ENCODE measurements at regions of chr22 and their contacts with region 1.

Region 1: GRCh38 chr22:42444077-42444904 is 12.1 kb upstream of the NFAM1 start:
- DNase-seq: peak; percentile 85
- H3K4me3 Mint-ChIP-seq: peak overlapping the region; percentile 64
- H3K27ac Mint-ChIP-seq: peak overlapping the region; percentile 69
- H3K4me1 Mint-ChIP-seq: peaks cover 31% of the 10 kb centered on the region
- H3K27me3 Mint-ChIP-seq: peaks cover under 1% of the 10 kb centered on the region

Region 2: GRCh38 chr22:41966607-41967240 is 477.6 kb before region 1 on chr22:
- CTCF ChIA-PET with region 1: interaction called, 12 read pairs
- POLR2A ChIA-PET with region 1: no interaction called
- DNase-seq: peak; percentile 54
- H3K4me3 Mint-ChIP-seq: no peak overlapping the region
- H3K27ac Mint-ChIP-seq: no peak overlapping the region
- H3K4me1 Mint-ChIP-seq: peaks cover 6% of the 10 kb centered on the region
- H3K27me3 Mint-ChIP-seq: peaks cover 2% of the 10 kb centered on the region

Region 3: GRCh38 chr22:42079319-42080251 is 364.7 kb before region 1 on chr22 and contains the start of gene SMDT1:
- CTCF ChIA-PET with region 1: interaction called, 5 read pairs
- POLR2A ChIA-PET with region 1: interaction called, 21 read pairs
- DNase-seq: peak; percentile 98
- H3K4me3 Mint-ChIP-seq: peak within 1 kb of the TSS; percentile 95
- H3K27ac Mint-ChIP-seq: peak within 1 kb of the TSS; percentile 92
- H3K4me1 Mint-ChIP-seq: peaks cover 42% of the 10 kb centered on the region
- H3K27me3 Mint-ChIP-seq: no peaks in the 10 kb centered on the region
- total RNA-seq, gene SMDT1: 92.7 to 98.1 TPM

Region 4: DNA sequence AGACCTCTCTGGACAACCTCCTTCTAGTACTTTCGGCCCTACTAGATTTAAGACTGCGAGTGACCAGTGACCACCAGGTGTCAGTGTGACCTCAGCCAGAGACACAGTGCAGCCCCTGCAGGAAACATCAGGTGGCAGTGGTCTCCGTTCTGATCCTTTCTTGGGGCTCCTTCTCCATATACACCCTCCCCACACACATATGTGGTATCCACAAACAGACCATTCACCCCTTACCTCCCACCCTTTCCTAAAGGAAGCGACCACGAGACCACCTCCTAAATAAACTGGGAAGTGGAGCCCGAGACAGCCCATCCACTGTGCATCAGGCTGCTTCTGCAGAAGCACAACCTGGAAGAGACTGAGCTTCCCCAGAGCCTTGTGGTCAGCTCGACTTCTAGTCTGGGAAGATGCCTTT is 275.2 kb before region 1 on chr22:
- CTCF ChIA-PET with region 1: interaction called, 24 read pairs
- POLR2A ChIA-PET with region 1: interaction called, 3 read pairs
- DNase-seq: peak; percentile 77
- H3K4me3 Mint-ChIP-seq: no peak overlapping the region
- H3K27ac Mint-ChIP-seq: no peak overlapping the region
- H3K4me1 Mint-ChIP-seq: peaks cover 22% of the 10 kb centered on the region
- H3K27me3 Mint-ChIP-seq: no peaks in the 10 kb centered on the region

Region 5: DNA sequence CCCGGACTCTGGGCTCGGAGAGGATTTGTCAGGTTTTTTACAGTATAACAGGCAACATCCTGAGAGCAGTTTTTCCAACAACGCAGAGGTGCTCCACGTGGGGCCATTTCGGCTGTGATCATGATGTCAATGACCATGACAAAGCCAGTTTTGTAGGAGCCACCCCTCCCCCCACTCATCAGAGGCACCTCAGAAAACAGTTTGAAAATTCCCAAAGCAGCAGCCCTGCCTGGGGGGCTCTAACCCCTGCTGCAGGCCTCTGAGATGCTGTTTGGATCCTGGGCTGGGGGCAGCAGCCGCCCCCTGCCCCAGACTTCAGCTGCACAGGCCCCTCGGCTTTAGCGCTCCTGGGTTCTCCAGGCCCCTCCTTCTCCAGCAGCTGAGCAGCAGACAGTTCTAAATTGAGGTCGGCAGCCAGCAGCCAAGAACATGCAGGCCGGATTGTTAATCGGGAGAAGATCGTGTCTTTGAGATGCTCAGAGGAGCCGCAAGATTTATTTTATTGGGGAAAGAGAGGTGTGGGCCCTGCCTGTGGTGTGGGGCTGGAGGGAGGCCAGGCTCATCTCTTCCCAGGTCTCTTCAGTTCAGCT is 31.5 kb before region 1 on chr22:
- CTCF ChIA-PET with region 1: no interaction called
- POLR2A ChIA-PET with region 1: no interaction called
- DNase-seq: no peak
- H3K4me3 Mint-ChIP-seq: no peak overlapping the region
- H3K27ac Mint-ChIP-seq: no peak overlapping the region
- H3K4me1 Mint-ChIP-seq: no peaks in the 10 kb centered on the region
- H3K27me3 Mint-ChIP-seq: no peaks in the 10 kb centered on the region

Region 6: DNA sequence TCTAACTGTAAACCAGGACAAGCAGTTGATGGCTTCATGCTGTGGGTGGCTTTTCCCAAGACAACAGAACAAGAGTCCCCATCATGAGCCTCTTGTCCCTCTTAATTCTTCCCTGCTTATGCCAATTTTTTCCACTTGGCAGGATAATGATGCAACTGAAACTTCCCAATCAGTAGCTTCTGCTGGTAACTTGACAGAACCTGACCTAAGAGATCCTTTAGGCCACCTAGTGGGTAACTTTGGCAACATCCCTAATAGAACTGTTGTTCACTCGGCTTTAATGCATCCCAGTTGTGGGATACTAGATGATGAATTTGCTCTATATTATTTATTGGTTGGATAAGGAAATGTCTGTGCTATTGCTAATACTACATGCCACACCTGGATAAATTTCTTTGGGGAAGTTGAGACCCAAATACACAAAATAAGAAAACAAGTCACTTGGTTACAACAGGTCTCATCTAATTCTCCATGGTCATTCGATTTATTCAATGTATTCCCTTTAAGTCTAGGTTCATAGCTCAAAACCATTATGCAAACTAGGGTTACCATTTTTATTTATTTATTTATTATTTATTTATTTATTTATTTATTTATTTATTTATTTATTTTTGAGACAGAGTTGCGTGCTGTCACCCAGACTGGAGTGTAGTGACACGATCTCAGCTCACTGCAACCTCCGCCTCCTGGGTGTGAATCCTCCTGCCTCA is 29.3 kb after region 1 on chr22:
- CTCF ChIA-PET with region 1: interaction called, 16 read pairs
- POLR2A ChIA-PET with region 1: interaction called, 3 read pairs
- DNase-seq: no peak
- H3K4me3 Mint-ChIP-seq: no peak overlapping the region
- H3K27ac Mint-ChIP-seq: no peak overlapping the region
- H3K4me1 Mint-ChIP-seq: peaks cover 5% of the 10 kb centered on the region
- H3K27me3 Mint-ChIP-seq: peaks cover 34% of the 10 kb centered on the region

Measured in activated CD4-positive, alpha-beta memory T cell treated with anti-CD3 and anti-CD28 coated beads, Interleukin-2, amount 10 ng/mL, durations not matched to agents 7 days and 5 days (primary cell).